AG04450 (cell line): ENCODE measurements at regions of chr7 and their contacts with region 1.

Region 1: DNA sequence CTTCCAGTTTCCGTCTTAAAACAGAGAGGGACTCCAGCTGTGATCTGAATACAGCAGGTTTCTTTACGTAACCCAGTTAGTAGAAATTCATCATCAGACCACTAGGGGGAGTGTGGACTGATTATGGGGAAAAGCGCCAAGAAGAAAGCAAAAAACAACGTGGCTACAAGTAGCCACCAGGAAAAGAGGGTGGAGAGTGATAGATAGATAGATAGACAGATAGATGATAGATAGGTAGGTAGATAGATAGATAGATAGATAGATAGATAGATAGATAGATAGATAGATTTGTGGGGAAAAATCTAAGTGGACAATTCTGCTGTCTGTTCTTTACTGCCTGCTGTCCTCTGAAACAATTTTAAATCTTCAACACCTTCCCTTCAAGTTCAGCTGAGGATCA is 12.7 kb upstream of the AKR1B10 start:
- DNase-seq: peak; percentile 57
- H3K4me3 ChIP-seq: no peak overlapping the region
- H3K27ac ChIP-seq: no peak overlapping the region
- H3K27me3 ChIP-seq: no peaks in the 10 kb centered on the region
- CTCF ChIP-seq: peak; percentile 82

Region 2: DNA sequence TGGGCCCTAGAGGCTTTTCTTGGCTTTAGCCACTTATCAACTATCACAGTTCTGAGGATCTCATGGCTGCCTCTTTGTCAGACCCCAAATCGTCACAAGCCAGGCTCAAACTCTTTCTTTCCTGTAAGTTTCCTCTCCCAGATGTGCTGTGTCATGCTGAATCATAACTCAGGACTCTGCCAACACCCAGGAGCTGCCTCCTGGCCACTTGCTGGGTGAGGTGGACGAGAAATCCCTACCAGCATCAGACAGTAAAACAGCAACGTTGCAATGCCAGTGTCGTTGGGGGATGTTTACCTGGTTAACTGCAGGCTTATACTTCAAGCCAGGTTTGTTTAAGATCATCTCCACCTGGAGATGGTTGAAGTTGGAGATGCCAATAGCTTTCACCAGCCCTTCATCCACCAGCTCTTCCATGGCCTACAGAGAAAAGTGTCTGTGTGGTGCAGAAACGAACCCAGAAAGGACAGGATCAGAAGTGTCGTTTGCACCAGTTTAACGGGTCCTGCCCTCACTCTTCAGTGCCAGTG is 65.9 kb before region 1 on chr7:
- CTCF ChIA-PET with region 1: interaction called, 15 read pairs
- POLR2A ChIA-PET with region 1: no interaction called
- DNase-seq: peak; percentile 74
- H3K4me3 ChIP-seq: no peak overlapping the region
- H3K27ac ChIP-seq: peak overlapping the region; percentile 93
- H3K27me3 ChIP-seq: no peaks in the 10 kb centered on the region
- CTCF ChIP-seq: no peak

Region 3: GRCh38 chr7:134480736-134481135 is 33.9 kb before region 1 on chr7:
- CTCF ChIA-PET with region 1: interaction called, 13 read pairs
- POLR2A ChIA-PET with region 1: no interaction called
- DNase-seq: no peak
- H3K4me3 ChIP-seq: no peak overlapping the region
- H3K27ac ChIP-seq: no peak overlapping the region
- H3K27me3 ChIP-seq: no peaks in the 10 kb centered on the region
- CTCF ChIP-seq: no peak

Region 4: DNA sequence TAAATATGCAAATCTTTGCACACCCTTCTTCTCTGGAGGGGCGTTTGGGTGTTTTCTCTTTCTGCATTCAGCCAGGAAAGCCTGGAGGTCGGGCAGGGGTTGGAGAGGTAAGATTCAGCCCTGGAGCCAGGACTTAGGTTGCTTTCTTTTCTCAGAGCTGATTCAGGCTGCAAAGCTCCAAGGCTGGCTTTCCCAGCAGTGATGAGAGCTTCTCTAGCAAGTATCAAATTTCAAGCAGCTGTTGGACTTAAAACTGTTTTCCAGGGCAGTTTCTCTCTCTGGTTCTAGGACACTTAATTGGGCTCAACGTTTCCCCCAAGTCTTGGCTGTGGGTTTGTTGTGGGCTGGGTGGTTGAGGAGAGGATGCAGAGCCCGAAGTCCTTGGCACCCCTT is 13.3 kb after region 1 on chr7:
- CTCF ChIA-PET with region 1: interaction called, 21 read pairs
- POLR2A ChIA-PET with region 1: no interaction called
- DNase-seq: peak; percentile 59
- H3K4me3 ChIP-seq: peak overlapping the region; percentile 31; the same call in 1 of the 2 replicates
- H3K27ac ChIP-seq: peak overlapping the region; percentile 61
- H3K27me3 ChIP-seq: peaks cover 4% of the 10 kb centered on the region
- CTCF ChIP-seq: no peak

Region 5: GRCh38 chr7:134553976-134554375 is 39.3 kb after region 1 on chr7:
- CTCF ChIA-PET with region 1: interaction called, 33 read pairs
- POLR2A ChIA-PET with region 1: no interaction called
- DNase-seq: no peak
- H3K4me3 ChIP-seq: no peak overlapping the region
- H3K27ac ChIP-seq: no peak overlapping the region
- H3K27me3 ChIP-seq: peaks cover 25% of the 10 kb centered on the region
- CTCF ChIP-seq: no peak